ENCODE measurements at regions of chr2 and their contacts with region 1.

Region 1: GRCh38 chr2:108607706-108608301 is 73.5 kb downstream of the LIMS1 start:
- DNase-seq: no peak
- ATAC-seq: peak; percentile 17; the same call in 1 of the 3 replicates
- H3K4me3 ChIP-seq: no peak overlapping the region
- H3K27ac ChIP-seq: no peak overlapping the region
- H3K4me1 ChIP-seq: peaks cover 47% of the 10 kb centered on the region
- H3K27me3 ChIP-seq: no peaks in the 10 kb centered on the region
- CTCF ChIP-seq: peak; percentile 67 to 80 (median 74)
- EP300 ChIP-seq: no peak
- POLR2A ChIP-seq: no peak
- RAD21 ChIP-seq: peak; percentile 93

Region 2: DNA sequence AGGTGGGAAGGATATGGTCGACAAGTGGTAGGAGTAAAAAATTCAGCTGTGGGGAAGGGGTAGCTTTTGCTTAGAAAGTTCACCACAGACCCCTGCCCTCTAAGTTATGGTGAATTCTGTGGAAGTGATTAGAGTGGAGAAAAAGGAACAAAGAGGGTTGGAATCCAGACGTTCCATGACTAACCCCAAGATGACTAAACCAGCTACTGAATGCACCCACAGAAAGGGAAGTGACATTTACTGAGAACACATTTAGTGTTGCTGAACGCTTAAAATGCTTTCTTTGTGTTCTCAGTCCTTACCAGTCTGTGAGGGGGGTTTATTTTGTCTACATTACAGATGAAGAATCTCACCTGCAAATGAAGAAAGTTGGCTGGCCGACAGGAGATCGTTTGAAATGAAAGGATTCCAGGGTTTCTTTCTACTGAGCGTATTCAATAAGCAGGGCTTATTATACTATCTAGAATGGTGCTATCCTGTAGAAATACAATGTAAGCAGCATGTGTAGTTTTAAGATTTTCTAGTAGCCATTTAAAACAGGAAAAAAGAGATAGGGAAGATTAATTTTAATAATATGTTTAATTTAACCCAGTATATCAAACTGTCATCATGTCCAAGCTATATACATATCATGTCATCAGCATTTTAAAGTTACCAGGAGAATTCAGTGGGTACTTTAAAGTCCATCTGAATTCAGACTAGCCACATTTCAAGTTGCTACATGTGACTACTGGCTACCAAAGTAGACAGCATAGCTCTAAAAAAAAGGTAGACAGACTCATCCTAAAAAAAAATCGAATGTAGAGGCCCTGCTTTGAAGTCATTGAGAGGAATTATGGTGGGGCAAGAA is 13.4 kb before region 1 on chr2:
- CTCF ChIA-PET with region 1: interaction called, 22 read pairs
- POLR2A ChIA-PET with region 1: interaction called, 10 read pairs
- RAD21 ChIA-PET with region 1: interaction called, 22 read pairs
- SMC1A ChIA-PET with region 1: interaction called, 45 read pairs
- in situ Hi-C with region 1: no loop called
- intact Hi-C with region 1: loop called (anchors 1 kb)
- DNase-seq: no peak
- ATAC-seq: peak; percentile 94
- H3K4me3 ChIP-seq: no peak overlapping the region
- H3K27ac ChIP-seq: no peak overlapping the region; the same call in 1 of the 2 replicates
- H3K4me1 ChIP-seq: peaks cover 34% of the 10 kb centered on the region
- H3K27me3 ChIP-seq: no peaks in the 10 kb centered on the region
- CTCF ChIP-seq: no peak
- EP300 ChIP-seq: peak; percentile 94 to 98
- POLR2A ChIP-seq: no peak
- RAD21 ChIP-seq: no peak

Region 3: DNA sequence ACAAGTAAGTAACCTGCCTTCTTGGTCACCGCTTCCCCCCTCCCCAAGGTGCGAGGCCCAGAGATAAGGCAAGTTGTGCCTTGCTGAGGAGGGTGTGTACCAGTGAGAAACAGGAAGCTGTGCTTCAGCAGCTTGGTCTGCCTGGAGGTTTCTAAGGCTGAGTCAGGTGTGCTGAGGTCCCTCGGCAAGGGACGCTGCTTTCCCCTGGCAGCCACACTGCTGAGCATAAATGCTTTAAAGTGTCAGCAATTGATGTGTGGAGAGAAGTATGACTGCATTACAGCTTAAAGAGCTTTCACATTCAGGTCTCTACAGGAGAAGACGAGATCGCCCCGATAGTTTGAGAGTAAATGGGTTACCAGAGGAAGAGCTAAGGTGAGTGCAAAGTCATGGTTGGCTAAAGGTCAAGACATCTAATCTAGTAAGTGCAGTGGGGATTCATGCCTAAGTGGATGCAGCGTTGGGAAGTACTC is 13.3 kb after region 1 on chr2:
- CTCF ChIA-PET with region 1: interaction called, 34 read pairs
- POLR2A ChIA-PET with region 1: interaction called, 13 read pairs
- RAD21 ChIA-PET with region 1: interaction called, 441 read pairs
- SMC1A ChIA-PET with region 1: interaction called, 800 read pairs
- in situ Hi-C with region 1: no loop called
- intact Hi-C with region 1: no loop called
- DNase-seq: no peak
- ATAC-seq: peak; percentile 100
- H3K4me3 ChIP-seq: no peak overlapping the region
- H3K27ac ChIP-seq: no peak overlapping the region
- H3K4me1 ChIP-seq: peaks cover 16% of the 10 kb centered on the region
- H3K27me3 ChIP-seq: no peaks in the 10 kb centered on the region
- CTCF ChIP-seq: no peak
- EP300 ChIP-seq: peak in 1 of 2 experiments; percentile 38; a peak in 1 of 4 replicates
- POLR2A ChIP-seq: peak; percentile 43; the same call in 1 of the 2 replicates
- RAD21 ChIP-seq: no peak

Region 4: GRCh38 chr2:108629417-108629816 is 21.6 kb after region 1 on chr2:
- CTCF ChIA-PET with region 1: interaction called, 441 read pairs
- POLR2A ChIA-PET with region 1: interaction called, 51 read pairs
- RAD21 ChIA-PET with region 1: interaction called, 441 read pairs
- SMC1A ChIA-PET with region 1: interaction called, 800 read pairs
- in situ Hi-C with region 1: no loop called
- intact Hi-C with region 1: loop called (anchors 1 kb)
- DNase-seq: no peak
- ATAC-seq: peak; percentile 74
- H3K4me3 ChIP-seq: peak overlapping the region; percentile 23; the same call in 1 of the 2 replicates
- H3K27ac ChIP-seq: peak overlapping the region; percentile 53; the same call in 1 of the 2 replicates
- H3K4me1 ChIP-seq: peaks cover 41% of the 10 kb centered on the region
- H3K27me3 ChIP-seq: no peaks in the 10 kb centered on the region
- CTCF ChIP-seq: no peak
- EP300 ChIP-seq: peak; percentile 67 to 68; a peak in 3 of 4 replicates
- POLR2A ChIP-seq: no peak
- RAD21 ChIP-seq: 0 out of 2 replicates have a peak, but pooled peaks have one; percentile 1

Region 5: GRCh38 chr2:108719149-108720044 is 111.6 kb after region 1 on chr2 and contains the start of gene RANBP2:
- CTCF ChIA-PET with region 1: interaction called, 3 read pairs
- POLR2A ChIA-PET with region 1: interaction called, 5 read pairs
- RAD21 ChIA-PET with region 1: interaction called, 3 read pairs
- SMC1A ChIA-PET with region 1: interaction called, 5 read pairs
- in situ Hi-C with region 1: no loop called
- intact Hi-C with region 1: loop called (anchors 2 kb)
- DNase-seq: peak; percentile 81
- ATAC-seq: peak; percentile 96
- H3K4me3 ChIP-seq: peak within 1 kb of the TSS; percentile 79
- H3K27ac ChIP-seq: peak within 1 kb of the TSS; percentile 81
- H3K4me1 ChIP-seq: no peaks in the 10 kb centered on the region
- H3K27me3 ChIP-seq: no peaks in the 10 kb centered on the region
- CTCF ChIP-seq: no peak
- EP300 ChIP-seq: no peak
- POLR2A ChIP-seq: peak; percentile 97
- RAD21 ChIP-seq: no peak
- polyA plus RNA-seq, gene RANBP2: 9.0 to 9.2 TPM

Region 6: DNA sequence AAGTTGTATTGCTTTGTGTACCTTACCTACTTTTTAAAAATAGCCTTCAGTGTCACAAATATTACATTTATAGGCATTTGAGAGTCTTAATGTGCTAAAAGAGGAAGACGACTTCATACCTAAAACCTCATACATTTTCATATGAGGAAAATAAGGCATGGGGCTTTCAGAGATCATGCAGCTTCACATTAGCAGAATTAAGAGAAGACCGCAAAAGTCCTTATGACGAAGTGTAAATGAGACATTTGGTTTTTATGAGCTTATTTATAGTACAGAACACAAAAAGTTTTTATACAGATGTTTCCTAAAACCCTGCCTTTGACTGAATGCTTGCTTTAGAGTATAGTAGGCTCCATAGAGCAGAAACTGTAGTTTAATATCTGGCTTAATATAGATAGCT is 168.7 kb after region 1 on chr2:
- CTCF ChIA-PET with region 1: no interaction called
- POLR2A ChIA-PET with region 1: no interaction called
- RAD21 ChIA-PET with region 1: interaction called, 14 read pairs
- SMC1A ChIA-PET with region 1: interaction called, 6 read pairs
- in situ Hi-C with region 1: no loop called
- intact Hi-C with region 1: no loop called
- DNase-seq: peak; percentile 62
- ATAC-seq: peak; percentile 93
- H3K4me3 ChIP-seq: no peak overlapping the region
- H3K27ac ChIP-seq: peak overlapping the region; percentile 74
- H3K4me1 ChIP-seq: peaks cover 19% of the 10 kb centered on the region
- H3K27me3 ChIP-seq: no peaks in the 10 kb centered on the region
- CTCF ChIP-seq: no peak
- EP300 ChIP-seq: peak; percentile 93 to 95; a peak in 3 of 4 replicates
- POLR2A ChIP-seq: no peak
- RAD21 ChIP-seq: no peak

Measured in GM12878 (cell line).